Naive thymus-derived CD4-positive, alpha-beta T cell (primary cell): ENCODE measurements at regions of chr19 and their contacts with region 1.

Region 1: DNA sequence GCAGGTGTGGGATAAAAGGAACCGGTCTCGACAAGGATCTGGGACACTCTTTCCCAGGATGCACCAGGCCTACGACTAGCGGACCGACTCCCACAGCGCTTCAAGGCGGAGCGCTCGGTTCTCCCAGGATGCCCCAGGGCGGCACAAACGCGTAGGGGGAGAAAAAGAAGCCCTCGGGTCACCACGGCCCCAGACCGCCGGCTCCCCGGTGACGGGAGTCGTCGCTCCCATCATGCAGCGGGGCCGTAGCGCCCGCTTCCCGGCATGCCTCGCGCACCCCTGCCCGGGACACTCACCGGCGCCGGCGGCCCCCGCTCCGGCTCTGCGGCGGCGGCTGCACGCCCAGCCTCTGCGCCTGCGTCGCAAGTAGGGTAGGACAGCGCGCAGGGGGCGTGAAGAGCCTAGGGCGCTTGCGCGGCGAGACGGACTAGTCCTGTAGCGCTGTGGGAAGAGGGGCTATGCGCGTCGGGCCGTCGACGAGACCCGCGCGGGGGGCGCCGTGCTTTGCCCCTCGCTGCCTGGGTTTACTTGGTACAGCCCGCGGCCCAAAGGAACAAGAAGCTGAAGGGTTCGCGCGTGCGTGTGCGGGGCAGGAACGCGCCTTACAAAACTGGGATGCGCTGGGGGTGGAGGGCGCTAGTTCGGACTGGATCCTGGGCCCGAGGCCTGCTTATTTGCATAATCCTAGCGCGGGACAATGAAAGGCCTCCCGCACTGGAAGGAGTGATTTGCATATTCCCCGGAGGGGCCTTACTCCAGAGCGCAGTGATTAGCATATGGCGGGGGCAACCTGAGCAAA is at the start of gene ZNF428:
- DNase-seq: peak; percentile 77 to 91 (median 84)
- ATAC-seq: peak; percentile 93
- H3K4me3 ChIP-seq: peak within 1 kb of the TSS; percentile 63
- H3K4me3 Mint-ChIP-seq: peak within 1 kb of the TSS; percentile 95 to 99 (median 98)
- H3K27ac ChIP-seq: peak within 1 kb of the TSS; percentile 83
- H3K27ac Mint-ChIP-seq: peak within 1 kb of the TSS; percentile 93 to 99 (median 97)
- H3K4me1 ChIP-seq: peaks cover 9 to 12% of the 10 kb centered on the region in 2 donors
- H3K4me1 Mint-ChIP-seq: peaks cover 18 to 59% (median 36%) of the 10 kb centered on the region in 7 donors
- H3K27me3 ChIP-seq: no peaks in the 10 kb centered on the region
- H3K27me3 Mint-ChIP-seq: no peaks in the 10 kb centered on the region
- total RNA-seq, gene ZNF428: 21.7 to 29.1 (median 25.9) TPM

Region 2: DNA sequence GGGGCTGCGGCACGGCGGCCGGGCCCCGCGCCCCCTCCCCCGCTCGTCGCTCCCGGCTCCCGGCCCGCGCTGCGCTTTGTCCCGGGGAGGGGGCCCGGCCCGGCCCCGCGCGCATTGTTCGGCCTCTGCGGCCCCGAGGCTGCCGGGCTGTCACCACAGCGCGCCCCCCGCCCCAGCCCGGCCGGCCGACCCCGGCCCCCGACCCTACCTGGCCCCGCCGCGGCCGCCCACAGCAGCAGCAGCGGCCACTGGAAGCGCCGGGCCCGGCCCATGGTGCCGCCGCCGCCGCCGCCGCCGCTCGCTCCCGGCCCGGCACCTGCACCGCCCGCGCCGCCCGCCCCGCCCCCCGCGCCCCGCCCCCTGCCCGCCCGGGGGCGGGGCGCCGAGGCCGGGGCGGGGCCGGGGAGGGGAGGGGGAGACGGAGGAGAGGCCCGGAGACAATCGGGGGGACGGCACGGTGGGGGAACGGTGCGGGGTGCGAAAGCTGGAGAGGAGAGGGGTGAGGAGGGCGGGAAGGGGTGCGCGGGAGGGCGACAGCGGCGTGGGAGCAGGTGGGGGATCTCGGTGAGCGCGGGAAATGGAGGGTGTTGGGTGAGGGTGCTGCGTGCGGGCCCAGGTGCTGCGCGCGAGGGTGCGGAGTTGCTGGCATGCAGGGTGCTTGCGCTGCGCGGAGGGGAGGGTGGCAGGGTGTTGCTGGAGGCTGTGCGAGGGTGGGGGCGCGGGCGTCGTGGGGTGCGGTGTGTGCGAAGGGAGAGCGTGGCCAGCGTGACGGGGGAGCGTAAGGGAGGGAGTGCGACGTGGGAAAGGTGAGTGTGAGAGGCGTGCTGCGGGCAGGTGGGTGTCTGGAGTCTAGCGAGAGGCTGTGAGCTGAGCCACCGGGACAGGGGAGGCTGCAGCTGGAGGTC is 20.3 kb after region 1 on chr19 and contains the start of gene CADM4:
- CTCF ChIA-PET with region 1: no interaction called
- POLR2A ChIA-PET with region 1: no interaction called
- intact Hi-C with region 1: loop called in 1 of 2 experiments (anchors 1 kb)
- DNase-seq: peak; percentile 42 to 70 (median 57)
- ATAC-seq: peak; percentile 91
- H3K4me3 ChIP-seq: peak within 1 kb of the TSS; percentile 61
- H3K4me3 Mint-ChIP-seq: peak within 1 kb of the TSS; percentile 76 to 93 (median 84)
- H3K27ac ChIP-seq: peak within 1 kb of the TSS; percentile 49
- H3K27ac Mint-ChIP-seq: peak within 1 kb of the TSS in 8 of 9 donors; percentile 2 to 92 (median 48)
- H3K4me1 ChIP-seq: peaks cover 0 to 6% of the 10 kb centered on the region in 2 donors
- H3K4me1 Mint-ChIP-seq: peaks cover 12 to 28% (median 15%) of the 10 kb centered on the region in 7 donors
- H3K27me3 ChIP-seq: peaks cover 4 to 8% of the 10 kb centered on the region in 2 donors
- H3K27me3 Mint-ChIP-seq: peaks cover 13 to 52% (median 30%) of the 10 kb centered on the region in 5 donors
- total RNA-seq, gene CADM4: 0.35 to 0.97 (median 0.51) TPM

Region 3: GRCh38 chr19:43651758-43652545 is 32.5 kb after region 1 on chr19:
- CTCF ChIA-PET with region 1: no interaction called
- POLR2A ChIA-PET with region 1: no interaction called
- intact Hi-C with region 1: loop called in 1 of 2 experiments (anchors 5 kb)
- DNase-seq: peak in 2 of 9 donors; percentile 28 to 37
- ATAC-seq: peak; percentile 48
- H3K4me3 ChIP-seq: no peak overlapping the region
- H3K4me3 Mint-ChIP-seq: no peak overlapping the region
- H3K27ac ChIP-seq: no peak overlapping the region
- H3K27ac Mint-ChIP-seq: peak overlapping the region in 1 of 9 donors; percentile 9
- H3K4me1 ChIP-seq: no peaks in the 10 kb centered on the region
- H3K4me1 Mint-ChIP-seq: peaks cover 0 to 5% (median 0%) of the 10 kb centered on the region in 7 donors
- H3K27me3 ChIP-seq: no peaks in the 10 kb centered on the region
- H3K27me3 Mint-ChIP-seq: no peaks in the 10 kb centered on the region

Region 4: GRCh38 chr19:43901395-43902390 is 282.2 kb after region 1 on chr19:
- CTCF ChIA-PET with region 1: no interaction called
- POLR2A ChIA-PET with region 1: no interaction called
- intact Hi-C with region 1: no loop called
- DNase-seq: peak; percentile 21 to 56 (median 48)
- ATAC-seq: peak; percentile 87
- H3K4me3 ChIP-seq: peak overlapping the region; percentile 63
- H3K4me3 Mint-ChIP-seq: peak overlapping the region; percentile 89 to 97 (median 92)
- H3K27ac ChIP-seq: peak overlapping the region; percentile 27
- H3K27ac Mint-ChIP-seq: peak overlapping the region; percentile 66 to 86 (median 79)
- H3K4me1 ChIP-seq: peaks cover 0 to 7% of the 10 kb centered on the region in 2 donors
- H3K4me1 Mint-ChIP-seq: peaks cover 15 to 29% (median 21%) of the 10 kb centered on the region in 7 donors
- H3K27me3 ChIP-seq: no peaks in the 10 kb centered on the region
- H3K27me3 Mint-ChIP-seq: no peaks in the 10 kb centered on the region

Region 5: DNA sequence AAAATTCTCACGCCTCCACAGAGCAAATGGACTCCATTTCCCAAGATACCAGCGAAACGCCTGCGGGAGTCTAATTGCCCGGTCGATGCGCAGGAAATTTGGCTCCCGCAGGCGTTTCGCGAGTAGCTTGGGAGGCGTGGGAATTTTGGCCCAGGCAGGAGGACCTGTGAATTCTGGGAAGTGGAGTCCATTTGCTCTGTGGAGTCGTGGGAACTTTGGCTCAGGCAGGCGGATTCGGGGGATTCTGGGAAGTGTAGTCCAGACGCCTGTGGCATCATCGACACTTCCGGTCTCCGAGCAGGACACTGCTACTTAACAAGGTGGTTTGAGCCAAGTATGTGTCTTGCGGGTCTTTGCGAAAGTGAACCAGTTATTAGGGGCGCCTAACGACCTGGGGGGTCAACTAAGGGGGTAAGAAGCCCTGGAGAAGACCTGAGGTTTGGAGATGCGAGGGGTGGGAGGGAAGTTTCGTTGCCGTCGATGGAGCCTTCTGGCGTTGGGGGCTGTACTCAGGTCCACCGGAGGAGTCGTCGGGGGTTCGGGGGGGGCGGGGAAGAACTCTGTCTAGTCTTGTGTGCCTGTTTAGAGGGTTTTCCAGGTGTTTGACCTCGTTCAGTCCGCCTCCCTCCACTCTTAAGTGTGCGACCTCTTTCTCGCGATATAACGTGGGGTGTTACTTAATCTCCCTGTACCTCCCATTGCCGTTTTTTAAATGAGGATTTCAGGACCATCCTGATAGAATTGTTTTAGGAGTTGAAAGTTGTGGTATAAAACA is 364.6 kb after region 1 on chr19 and contains the start of gene ZNF155:
- CTCF ChIA-PET with region 1: no interaction called
- POLR2A ChIA-PET with region 1: no interaction called
- intact Hi-C with region 1: no loop called
- DNase-seq: peak; percentile 46 to 72 (median 64)
- ATAC-seq: peak; percentile 92
- H3K4me3 ChIP-seq: peak within 1 kb of the TSS; percentile 96
- H3K4me3 Mint-ChIP-seq: peak within 1 kb of the TSS; percentile 89 to 99 (median 96)
- H3K27ac ChIP-seq: peak within 1 kb of the TSS; percentile 79
- H3K27ac Mint-ChIP-seq: peak within 1 kb of the TSS; percentile 72 to 97 (median 93)
- H3K4me1 ChIP-seq: peaks cover 0 to 3% of the 10 kb centered on the region in 2 donors
- H3K4me1 Mint-ChIP-seq: peaks cover 0 to 28% (median 14%) of the 10 kb centered on the region in 7 donors
- H3K27me3 ChIP-seq: no peaks in the 10 kb centered on the region
- H3K27me3 Mint-ChIP-seq: no peaks in the 10 kb centered on the region
- total RNA-seq, gene ZNF155: 5.2 to 13.3 (median 9.1) TPM

Region 6: GRCh38 chr19:44356383-44357111 is 737.1 kb after region 1 on chr19 and contains the start of gene ZNF112:
- CTCF ChIA-PET with region 1: no interaction called
- POLR2A ChIA-PET with region 1: no interaction called
- intact Hi-C with region 1: no loop called
- DNase-seq: peak in 1 of 9 donors; percentile 0
- ATAC-seq: no peak
- H3K4me3 ChIP-seq: peak within 1 kb of the TSS; percentile 37
- H3K4me3 Mint-ChIP-seq: peak within 1 kb of the TSS in 9 of 10 donors; percentile 36 to 76 (median 64)
- H3K27ac ChIP-seq: no peak within 1 kb of the TSS
- H3K27ac Mint-ChIP-seq: peak within 1 kb of the TSS in 1 of 9 donors; percentile 79
- H3K4me1 ChIP-seq: no peaks in the 10 kb centered on the region
- H3K4me1 Mint-ChIP-seq: peaks cover 0 to 13% (median 5%) of the 10 kb centered on the region in 7 donors
- H3K27me3 ChIP-seq: no peaks in the 10 kb centered on the region
- H3K27me3 Mint-ChIP-seq: peaks cover 0 to 28% (median 20%) of the 10 kb centered on the region in 5 donors
- total RNA-seq, gene ZNF112: 0.16 to 0.40 (median 0.17) TPM in 3 of 5 experiments, not detected in the others